CD8-positive, alpha-beta T cell (primary cell): ENCODE measurements at regions of chr2 and their contacts with region 1.

Region 1: DNA sequence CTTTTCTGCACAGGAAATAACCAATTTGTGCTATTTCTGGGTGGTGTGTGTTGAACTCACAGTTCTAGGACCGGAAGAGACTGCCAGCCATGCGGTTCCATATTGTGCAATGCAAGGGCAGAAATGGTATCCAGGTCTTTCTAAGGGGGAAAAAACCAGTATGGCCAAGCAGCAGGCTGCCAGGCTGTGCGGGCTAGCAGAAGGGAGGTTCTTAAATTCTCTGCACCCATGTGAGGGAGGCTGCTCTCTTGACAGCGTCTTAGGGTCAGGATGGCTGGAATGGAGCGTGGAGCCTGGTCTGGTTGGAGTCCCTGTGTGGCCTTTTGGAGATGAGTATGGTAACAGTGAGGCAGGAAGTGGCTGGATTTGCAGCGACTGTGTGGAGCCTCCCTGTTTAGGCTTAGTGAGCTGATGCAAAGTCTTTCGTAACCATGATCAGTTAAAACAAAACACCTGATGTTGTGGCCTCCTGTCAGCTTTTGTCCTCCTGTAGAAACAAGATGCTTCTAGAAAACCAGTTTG is 52.6 kb downstream of the NCK2 start:
- DNase-seq: peak in 5 of 9 experiments; percentile 42 to 84 (median 65)
- ATAC-seq: peak; percentile 17
- H3K4me3 ChIP-seq: peak overlapping the region in 1 of 2 experiments; percentile 31
- H3K4me3 Mint-ChIP-seq: peak overlapping the region; percentile 74
- H3K27ac ChIP-seq: peak overlapping the region; percentile 51 to 88
- H3K27ac Mint-ChIP-seq: peak overlapping the region; percentile 96
- H3K4me1 ChIP-seq: peaks cover 92% of the 10 kb centered on the region
- H3K4me1 Mint-ChIP-seq: peaks cover 96% of the 10 kb centered on the region
- H3K27me3 ChIP-seq: no peaks in the 10 kb centered on the region
- H3K27me3 Mint-ChIP-seq: no peaks in the 10 kb centered on the region
- CTCF ChIP-seq: no peak

Region 2: GRCh38 chr2:104340162-104340561 is 1457.2 kb before region 1 on chr2:
- CTCF ChIA-PET with region 1: no interaction called
- POLR2A ChIA-PET with region 1: no interaction called
- intact Hi-C with region 1: no loop called
- DNase-seq: no peak
- ATAC-seq: no peak
- H3K4me3 ChIP-seq: no peak overlapping the region
- H3K4me3 Mint-ChIP-seq: no peak overlapping the region
- H3K27ac ChIP-seq: no peak overlapping the region
- H3K27ac Mint-ChIP-seq: no peak overlapping the region
- H3K4me1 ChIP-seq: no peaks in the 10 kb centered on the region
- H3K4me1 Mint-ChIP-seq: no peaks in the 10 kb centered on the region
- H3K27me3 ChIP-seq: no peaks in the 10 kb centered on the region
- H3K27me3 Mint-ChIP-seq: peaks cover 8% of the 10 kb centered on the region
- CTCF ChIP-seq: no peak

Region 3: DNA sequence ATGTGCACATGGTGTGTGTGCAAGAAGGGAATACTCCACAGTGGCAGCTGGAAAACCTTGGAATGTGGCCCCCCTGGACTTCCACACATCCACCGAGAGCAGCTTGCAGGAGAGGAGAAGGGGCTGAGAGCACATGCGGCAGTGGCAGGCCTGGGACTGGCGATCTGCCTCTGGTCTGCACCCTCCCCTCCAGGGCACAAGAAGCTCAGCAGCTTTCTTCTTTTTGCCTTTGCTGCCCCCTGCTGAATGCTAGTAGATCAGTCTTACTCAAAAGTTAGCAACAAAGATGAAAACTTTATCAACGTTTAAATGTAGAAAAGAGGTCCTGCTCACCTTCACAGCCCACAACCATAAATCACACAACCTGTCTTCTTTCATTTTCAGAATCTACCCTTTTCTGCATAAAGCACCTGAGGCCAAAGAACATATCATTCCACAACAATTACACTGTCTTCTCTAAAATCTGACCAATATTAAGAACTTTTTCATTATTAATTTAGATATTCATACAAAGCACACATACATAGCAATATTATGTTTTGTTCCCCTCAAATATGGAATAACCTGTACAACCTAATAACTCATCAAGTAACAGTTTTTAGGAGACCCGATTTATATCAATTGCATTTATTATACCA is 502.4 kb before region 1 on chr2:
- CTCF ChIA-PET with region 1: no interaction called
- POLR2A ChIA-PET with region 1: no interaction called
- intact Hi-C with region 1: no loop called
- DNase-seq: peak in 3 of 9 experiments; percentile 25 to 27 (median 27)
- ATAC-seq: no peak
- H3K4me3 ChIP-seq: no peak overlapping the region
- H3K4me3 Mint-ChIP-seq: no peak overlapping the region
- H3K27ac ChIP-seq: no peak overlapping the region
- H3K27ac Mint-ChIP-seq: no peak overlapping the region
- H3K4me1 ChIP-seq: no peaks in the 10 kb centered on the region
- H3K4me1 Mint-ChIP-seq: peaks cover 1% of the 10 kb centered on the region
- H3K27me3 ChIP-seq: no peaks in the 10 kb centered on the region
- H3K27me3 Mint-ChIP-seq: no peaks in the 10 kb centered on the region
- CTCF ChIP-seq: no peak

Region 4: DNA sequence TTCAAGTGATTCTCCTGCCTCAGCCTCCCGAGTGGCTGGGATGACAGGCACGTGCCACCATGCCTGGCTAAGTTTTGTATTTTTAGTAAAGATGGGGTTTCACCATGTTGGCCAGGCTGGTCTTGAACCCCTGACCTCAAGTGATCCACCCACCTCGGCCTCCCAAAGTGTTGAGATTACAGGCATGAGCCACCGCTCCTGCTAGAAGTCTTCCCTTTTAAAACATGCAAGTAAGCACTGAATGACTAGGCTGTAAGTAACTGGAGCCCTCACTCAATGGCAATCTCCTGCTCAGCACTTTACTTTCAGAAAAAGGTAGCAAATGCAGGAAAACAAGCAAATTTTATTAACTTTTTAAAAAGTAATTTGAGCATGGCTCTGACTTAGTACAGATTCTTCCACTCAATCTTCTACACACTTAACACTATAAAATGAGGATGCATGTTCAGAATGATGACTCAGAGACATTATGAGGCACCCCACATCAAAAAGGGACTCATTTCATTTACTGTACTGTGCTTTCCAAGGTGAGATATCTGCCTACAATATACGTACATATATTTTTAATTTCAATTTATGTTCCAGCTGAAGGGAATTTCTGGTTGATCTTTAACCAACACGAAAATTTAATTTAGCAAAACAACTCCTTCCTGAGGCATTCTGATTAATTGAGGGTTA is 59.2 kb before region 1 on chr2:
- CTCF ChIA-PET with region 1: interaction called, 3 read pairs
- POLR2A ChIA-PET with region 1: interaction called, 4 read pairs
- intact Hi-C with region 1: loop called in 1 of 2 experiments (anchors 2 kb)
- DNase-seq: peak in 3 of 9 experiments; percentile 51 to 84 (median 71)
- ATAC-seq: peak; percentile 85
- H3K4me3 ChIP-seq: peak overlapping the region; percentile 21 to 36
- H3K4me3 Mint-ChIP-seq: peak overlapping the region; percentile 74
- H3K27ac ChIP-seq: peak overlapping the region; percentile 63 to 86
- H3K27ac Mint-ChIP-seq: peak overlapping the region; percentile 95
- H3K4me1 ChIP-seq: peaks cover 56% of the 10 kb centered on the region
- H3K4me1 Mint-ChIP-seq: peaks cover 85% of the 10 kb centered on the region
- H3K27me3 ChIP-seq: no peaks in the 10 kb centered on the region
- H3K27me3 Mint-ChIP-seq: no peaks in the 10 kb centered on the region
- CTCF ChIP-seq: no peak

Region 5: DNA sequence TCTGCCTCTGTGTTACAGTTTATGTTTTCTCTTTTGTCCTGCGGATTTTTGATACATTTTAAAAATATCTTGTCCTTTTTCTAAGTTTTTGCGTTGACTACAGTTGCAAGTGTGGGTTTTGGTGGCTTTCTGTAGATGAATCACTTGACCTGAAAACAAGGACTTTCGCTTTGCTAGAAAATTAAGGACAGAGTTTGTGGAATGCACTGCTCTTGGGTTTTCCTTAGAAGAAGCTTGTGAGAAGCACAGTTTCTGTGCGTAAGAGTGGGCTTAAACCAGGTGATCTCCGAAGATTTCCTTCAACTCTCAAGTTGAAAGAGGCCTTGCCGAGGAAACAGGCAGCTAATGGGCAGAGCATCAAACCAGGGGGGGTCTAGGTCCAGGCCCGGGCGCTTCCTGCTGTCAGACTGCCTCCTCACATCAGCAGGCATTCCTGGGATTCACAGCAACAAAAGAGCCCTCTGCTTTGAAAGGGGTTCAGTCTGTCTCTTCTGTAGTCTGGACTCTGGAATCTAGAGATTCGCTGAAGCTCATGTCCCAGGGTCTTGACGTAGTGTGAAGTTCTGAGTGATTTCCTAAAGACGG is 35.3 kb before region 1 on chr2:
- CTCF ChIA-PET with region 1: interaction called, 4 read pairs
- POLR2A ChIA-PET with region 1: no interaction called
- intact Hi-C with region 1: loop called in 1 of 2 experiments (anchors 2 kb)
- DNase-seq: peak in 1 of 9 experiments; percentile 35
- ATAC-seq: no peak
- H3K4me3 ChIP-seq: peak overlapping the region in 1 of 2 experiments; percentile 9
- H3K4me3 Mint-ChIP-seq: peak overlapping the region; percentile 64
- H3K27ac ChIP-seq: peak overlapping the region in 1 of 2 experiments; percentile 71
- H3K27ac Mint-ChIP-seq: peak overlapping the region; percentile 93
- H3K4me1 ChIP-seq: peaks cover 95% of the 10 kb centered on the region
- H3K4me1 Mint-ChIP-seq: peaks cover 97% of the 10 kb centered on the region
- H3K27me3 ChIP-seq: no peaks in the 10 kb centered on the region
- H3K27me3 Mint-ChIP-seq: no peaks in the 10 kb centered on the region
- CTCF ChIP-seq: no peak

Region 6: DNA sequence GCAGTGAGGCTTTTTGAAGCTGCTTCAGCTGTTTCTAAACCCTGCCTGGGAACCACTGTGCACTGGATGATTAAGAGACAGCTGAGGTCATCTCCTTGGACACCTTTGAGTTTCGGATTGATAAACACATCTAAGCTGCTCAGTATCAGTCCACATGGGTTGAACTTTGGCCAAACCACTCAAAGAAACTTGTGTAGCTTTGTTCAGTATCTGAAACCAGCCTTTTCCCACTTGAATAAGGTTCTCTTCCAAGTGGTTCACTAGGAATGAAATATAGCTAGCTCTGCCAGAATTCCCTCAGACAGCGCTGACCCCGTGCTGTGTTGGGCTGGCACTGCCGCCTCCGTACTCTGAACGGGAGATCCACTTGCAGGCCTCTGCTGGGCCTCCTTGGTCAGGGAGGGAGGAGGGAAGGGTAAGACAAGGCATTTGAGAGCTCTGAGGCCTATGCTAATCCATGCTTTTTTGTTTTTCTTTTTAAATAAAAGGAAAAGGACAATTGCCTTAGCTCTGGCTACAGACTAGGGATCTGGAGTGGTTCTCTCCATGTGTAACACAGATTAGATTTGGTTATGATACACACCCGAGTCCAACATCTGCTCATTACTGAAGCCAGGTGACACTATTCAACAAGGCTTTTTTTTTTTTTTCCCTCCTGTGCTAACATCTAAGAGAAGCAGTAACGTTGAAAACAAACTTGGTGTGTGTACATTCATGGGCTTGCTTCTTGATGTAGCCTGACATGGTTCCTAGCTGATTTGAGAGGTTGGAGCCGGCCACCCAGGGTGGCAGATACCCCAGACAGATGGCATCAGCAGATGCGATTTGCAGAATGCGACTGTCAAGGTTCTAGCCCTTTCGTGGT is 15.1 kb after region 1 on chr2:
- CTCF ChIA-PET with region 1: interaction called, 6 read pairs
- POLR2A ChIA-PET with region 1: interaction called, 13 read pairs
- intact Hi-C with region 1: loop called in 1 of 2 experiments (anchors 2 kb)
- DNase-seq: no peak
- ATAC-seq: no peak
- H3K4me3 ChIP-seq: no peak overlapping the region
- H3K4me3 Mint-ChIP-seq: no peak overlapping the region
- H3K27ac ChIP-seq: no peak overlapping the region
- H3K27ac Mint-ChIP-seq: peak overlapping the region; percentile 77
- H3K4me1 ChIP-seq: peaks cover 89% of the 10 kb centered on the region
- H3K4me1 Mint-ChIP-seq: peaks cover 93% of the 10 kb centered on the region
- H3K27me3 ChIP-seq: no peaks in the 10 kb centered on the region
- H3K27me3 Mint-ChIP-seq: no peaks in the 10 kb centered on the region
- CTCF ChIP-seq: no peak

Region 7: GRCh38 chr2:105929516-105929915 is 132.2 kb after region 1 on chr2:
- CTCF ChIA-PET with region 1: interaction called, 4 read pairs
- POLR2A ChIA-PET with region 1: interaction called, 14 read pairs
- intact Hi-C with region 1: loop called in 1 of 2 experiments (anchors 5 kb)
- DNase-seq: peak in 8 of 9 experiments; percentile 26 to 81 (median 56)
- ATAC-seq: peak; percentile 79
- H3K4me3 ChIP-seq: no peak overlapping the region
- H3K4me3 Mint-ChIP-seq: peak overlapping the region; percentile 59
- H3K27ac ChIP-seq: peak overlapping the region; percentile 3 to 49
- H3K27ac Mint-ChIP-seq: peak overlapping the region; percentile 95
- H3K4me1 ChIP-seq: peaks cover 90% of the 10 kb centered on the region
- H3K4me1 Mint-ChIP-seq: peaks cover 88% of the 10 kb centered on the region
- H3K27me3 ChIP-seq: no peaks in the 10 kb centered on the region
- H3K27me3 Mint-ChIP-seq: no peaks in the 10 kb centered on the region
- CTCF ChIP-seq: no peak